ENCODE measurements at regions of chr20 and their contacts with region 1.

Region 1: GRCh38 chr20:5788385-5788895 is 38.2 kb downstream of the SHLD1 start:
- DNase-seq: peak; percentile 74 to 75
- ATAC-seq: peak; percentile 76 to 84
- H3K4me3 ChIP-seq: no peak overlapping the region
- H3K27ac ChIP-seq: no peak overlapping the region
- H3K4me1 ChIP-seq: peaks cover 16 to 24% of the 10 kb centered on the region in 2 donors
- H3K27me3 ChIP-seq: no peaks in the 10 kb centered on the region
- CTCF ChIP-seq: peak; percentile 86 to 93 (median 89)
- POLR2A ChIP-seq: no peak

Region 2: DNA sequence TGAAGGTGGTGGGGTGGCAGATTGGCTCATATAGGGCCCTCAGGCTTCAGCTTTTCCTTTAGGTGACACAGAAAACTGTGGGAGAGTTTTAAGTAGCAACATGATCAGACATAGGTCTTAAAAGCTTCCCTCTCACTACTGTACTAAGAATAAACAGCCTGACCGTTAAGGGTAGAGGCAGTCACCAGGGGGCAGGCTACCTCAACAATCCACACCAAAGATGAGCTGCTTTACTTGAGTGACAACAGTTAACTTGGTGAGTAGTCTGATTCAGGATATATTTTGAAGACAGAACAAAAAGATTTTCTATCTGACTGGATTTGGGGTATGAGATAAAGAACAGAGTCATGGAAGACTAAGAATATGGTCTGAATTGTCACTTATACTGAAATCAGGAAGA is 231.3 kb before region 1 on chr20:
- in situ Hi-C with region 1: loop called in 2 of 4 experiments (anchors 10 to 25 kb)
- intact Hi-C with region 1: loop called (anchors 2 kb)
- DNase-seq: peak in 1 of 2 donors; percentile 24
- ATAC-seq: peak; percentile 54 to 60
- H3K4me3 ChIP-seq: no peak overlapping the region
- H3K27ac ChIP-seq: no peak overlapping the region
- H3K4me1 ChIP-seq: no peaks in the 10 kb centered on the region
- H3K27me3 ChIP-seq: no peaks in the 10 kb centered on the region
- CTCF ChIP-seq: peak in 4 of 5 experiments; percentile 26 to 44 (median 38)
- POLR2A ChIP-seq: no peak

Region 3: DNA sequence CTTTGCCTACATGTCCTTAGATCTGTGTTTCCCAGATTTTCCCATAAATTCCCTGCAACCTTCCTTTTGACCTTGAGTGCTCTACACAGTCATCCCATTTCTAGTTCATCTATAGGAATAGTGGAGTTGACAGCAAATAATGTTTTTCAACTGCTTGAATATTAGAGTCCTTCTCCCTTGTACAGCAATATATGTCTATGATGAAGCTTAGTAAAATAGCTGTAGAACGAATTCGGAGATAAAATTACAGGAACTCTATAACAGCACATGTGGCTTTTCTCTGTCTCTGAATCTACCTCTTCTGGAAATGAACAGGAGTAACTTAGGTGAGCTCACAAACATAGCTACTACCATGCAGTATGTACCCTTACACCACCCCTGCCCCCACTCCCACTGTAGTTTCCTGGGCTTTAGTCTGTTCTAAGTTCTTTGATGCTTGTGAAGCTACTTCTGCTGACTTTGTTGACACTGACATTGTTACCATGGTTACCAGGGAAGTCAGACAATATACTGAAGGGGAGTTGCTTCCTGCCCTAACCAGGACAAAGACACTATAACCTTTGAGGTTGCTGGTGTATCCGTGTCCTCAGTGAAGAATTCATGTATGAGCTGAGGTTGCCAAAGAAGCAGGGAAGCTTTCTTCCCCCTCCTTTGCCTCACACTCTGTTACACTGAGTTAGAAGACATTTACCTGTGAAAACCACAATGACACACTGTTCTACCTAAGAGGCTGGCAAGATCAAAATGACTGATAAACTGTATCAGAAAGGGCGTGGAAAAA is 74.0 kb before region 1 on chr20:
- in situ Hi-C with region 1: no loop called
- intact Hi-C with region 1: no loop called
- DNase-seq: no peak
- ATAC-seq: peak; percentile 19 to 25
- H3K4me3 ChIP-seq: no peak overlapping the region
- H3K27ac ChIP-seq: no peak overlapping the region
- H3K4me1 ChIP-seq: peaks cover 10 to 11% of the 10 kb centered on the region in 2 donors
- H3K27me3 ChIP-seq: no peaks in the 10 kb centered on the region
- CTCF ChIP-seq: no peak
- POLR2A ChIP-seq: no peak

Region 4: GRCh38 chr20:5844063-5844681 is 55.7 kb after region 1 on chr20:
- in situ Hi-C with region 1: no loop called
- intact Hi-C with region 1: no loop called
- DNase-seq: no peak
- ATAC-seq: peak; percentile 35 to 54
- H3K4me3 ChIP-seq: no peak overlapping the region
- H3K27ac ChIP-seq: peak overlapping the region in 1 of 4 donors; percentile 66
- H3K4me1 ChIP-seq: peaks cover 5 to 18% of the 10 kb centered on the region in 2 donors
- H3K27me3 ChIP-seq: no peaks in the 10 kb centered on the region
- CTCF ChIP-seq: no peak
- POLR2A ChIP-seq: peak in 1 of 2 donors; percentile 44